Activated naive CD8-positive, alpha-beta T cell treated with anti-CD3 and anti-CD28 coated beads, Interleukin-2, amount 10 ng/mL, durations not matched to agents 7 days and 5 days (primary cell): ENCODE measurements at regions of chr17 and their contacts with region 1.

Region 1: DNA sequence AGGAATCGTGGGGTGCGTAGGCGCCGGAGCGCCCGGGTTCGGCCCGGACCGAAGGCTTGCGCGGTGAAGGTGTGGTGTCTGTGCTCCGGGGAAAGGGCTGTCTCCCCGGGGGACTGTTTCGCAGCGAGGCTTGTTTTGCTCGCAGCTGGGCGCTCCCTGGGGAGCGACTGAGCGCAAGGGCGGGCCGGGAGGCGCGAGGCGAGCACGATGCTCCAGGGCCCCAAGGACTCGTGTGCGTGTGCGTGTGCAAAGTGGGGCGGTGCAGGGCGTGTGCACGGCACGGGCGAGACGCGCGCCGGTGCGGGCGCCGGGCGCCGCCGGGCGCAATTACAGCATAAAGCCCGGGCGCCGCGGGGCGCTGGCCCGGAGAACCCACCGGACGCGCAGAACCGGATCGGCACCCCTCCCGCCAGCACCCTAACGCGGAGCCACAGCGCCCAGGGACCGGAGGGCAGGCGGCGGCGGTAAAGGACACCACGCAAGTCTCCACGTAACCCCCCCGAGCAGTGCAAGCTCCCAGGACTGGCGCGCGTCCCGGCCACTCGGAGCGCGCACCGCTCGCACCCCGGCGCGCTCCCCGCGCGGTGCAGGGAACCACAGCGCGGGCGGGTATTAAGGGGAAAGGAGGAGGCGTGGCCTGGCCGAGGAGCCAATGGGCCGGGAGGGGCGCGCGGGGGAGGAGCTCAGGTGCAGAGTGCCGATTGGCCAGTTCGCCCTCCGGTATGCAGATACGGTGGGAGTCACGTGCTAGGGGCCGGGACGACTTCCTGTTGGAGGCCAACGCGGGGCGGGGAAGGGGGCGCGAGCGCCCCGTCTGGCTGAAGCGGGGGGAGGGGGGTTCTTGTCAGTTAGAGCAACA is at the start of gene TNRC6C:
- DNase-seq: peak; percentile 99
- ATAC-seq: peak; percentile 85
- H3K4me3 Mint-ChIP-seq: peak within 1 kb of the TSS; percentile 98
- H3K27ac Mint-ChIP-seq: peak within 1 kb of the TSS; percentile 95
- H3K4me1 Mint-ChIP-seq: peaks cover 30% of the 10 kb centered on the region
- H3K27me3 Mint-ChIP-seq: peaks cover 28% of the 10 kb centered on the region
- total RNA-seq, gene TNRC6C: 74.7 TPM

Region 2: DNA sequence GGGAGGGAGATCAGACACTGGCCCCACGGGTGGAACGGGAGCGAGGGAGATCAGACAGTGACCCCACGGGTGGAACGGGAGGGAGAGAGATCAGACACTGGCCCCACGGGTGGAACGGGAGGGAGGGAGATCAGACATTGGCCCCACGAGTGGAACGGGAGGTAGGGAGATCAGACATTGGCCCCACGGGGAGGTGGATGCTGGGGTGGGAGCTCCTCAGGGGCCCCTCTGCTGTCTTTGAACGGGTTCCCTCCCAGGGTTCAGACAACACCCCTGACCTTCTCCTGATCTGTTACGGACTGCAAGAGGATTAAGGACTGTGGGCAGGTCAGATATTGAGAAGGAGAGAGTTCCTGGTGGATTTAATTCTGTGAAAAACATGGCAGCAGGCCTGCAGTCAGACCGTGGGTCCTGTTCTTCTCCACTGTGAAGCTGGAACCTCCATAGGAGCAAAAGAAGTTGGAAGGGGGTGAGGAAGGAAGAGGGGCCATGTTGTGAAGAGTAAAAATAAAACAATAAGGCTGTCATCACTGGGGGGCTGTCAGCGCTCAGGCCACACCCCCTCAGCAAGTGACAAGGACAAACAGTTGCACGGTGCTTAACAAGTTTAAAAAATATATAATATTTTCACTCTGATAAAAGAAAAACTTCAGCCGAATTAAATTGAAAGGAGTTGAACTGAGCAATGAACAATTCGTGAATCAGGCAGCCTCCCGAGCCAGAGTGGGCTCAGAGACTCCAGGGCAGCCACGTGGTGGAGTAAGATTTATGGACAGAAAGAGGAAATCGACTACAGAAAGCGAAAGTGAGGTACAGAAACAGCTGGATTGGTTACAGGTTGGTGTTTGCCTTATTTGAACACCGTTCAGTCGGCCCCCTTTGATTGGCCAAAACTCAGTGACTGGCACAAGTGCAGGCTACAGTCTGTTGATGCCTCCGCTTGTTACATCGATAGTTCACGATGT is 348.3 kb before region 1 on chr17:
- POLR2A ChIA-PET with region 1: interaction called, 23 read pairs
- DNase-seq: peak; percentile 57
- ATAC-seq: peak; percentile 99
- H3K4me3 Mint-ChIP-seq: peak overlapping the region; percentile 80
- H3K27ac Mint-ChIP-seq: peak overlapping the region; percentile 94
- H3K4me1 Mint-ChIP-seq: peaks cover 17% of the 10 kb centered on the region
- H3K27me3 Mint-ChIP-seq: peaks cover 5% of the 10 kb centered on the region

Region 3: DNA sequence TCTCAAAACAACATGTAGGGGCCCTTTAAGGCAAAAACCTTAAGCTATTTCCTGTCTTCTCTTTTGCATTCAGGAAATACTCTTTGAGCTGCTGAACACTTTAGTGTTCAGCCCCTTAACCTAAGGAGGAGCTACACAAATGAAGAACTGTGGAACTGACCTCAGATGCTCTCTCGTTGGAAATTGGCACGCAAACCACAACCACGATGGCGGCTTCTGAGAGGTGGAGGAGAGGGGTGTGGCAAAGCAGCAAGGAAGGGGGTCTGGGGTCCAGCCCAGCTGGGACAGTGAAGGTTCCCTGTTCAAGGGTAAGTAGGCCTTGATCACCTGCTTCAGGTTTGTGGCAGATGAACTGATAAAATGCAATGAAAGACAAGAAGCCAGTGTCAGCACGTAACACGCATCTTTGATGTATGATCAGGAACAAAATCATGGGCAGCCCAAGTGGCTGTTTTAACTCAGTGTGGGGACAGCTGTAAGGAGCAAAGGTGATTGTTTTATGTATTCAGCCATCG is 291.1 kb before region 1 on chr17:
- POLR2A ChIA-PET with region 1: interaction called, 19 read pairs
- DNase-seq: peak; percentile 87
- ATAC-seq: peak; percentile 92
- H3K4me3 Mint-ChIP-seq: peak overlapping the region; percentile 92
- H3K27ac Mint-ChIP-seq: peak overlapping the region; percentile 95
- H3K4me1 Mint-ChIP-seq: peaks cover 40% of the 10 kb centered on the region
- H3K27me3 Mint-ChIP-seq: peaks cover 6% of the 10 kb centered on the region

Region 4: DNA sequence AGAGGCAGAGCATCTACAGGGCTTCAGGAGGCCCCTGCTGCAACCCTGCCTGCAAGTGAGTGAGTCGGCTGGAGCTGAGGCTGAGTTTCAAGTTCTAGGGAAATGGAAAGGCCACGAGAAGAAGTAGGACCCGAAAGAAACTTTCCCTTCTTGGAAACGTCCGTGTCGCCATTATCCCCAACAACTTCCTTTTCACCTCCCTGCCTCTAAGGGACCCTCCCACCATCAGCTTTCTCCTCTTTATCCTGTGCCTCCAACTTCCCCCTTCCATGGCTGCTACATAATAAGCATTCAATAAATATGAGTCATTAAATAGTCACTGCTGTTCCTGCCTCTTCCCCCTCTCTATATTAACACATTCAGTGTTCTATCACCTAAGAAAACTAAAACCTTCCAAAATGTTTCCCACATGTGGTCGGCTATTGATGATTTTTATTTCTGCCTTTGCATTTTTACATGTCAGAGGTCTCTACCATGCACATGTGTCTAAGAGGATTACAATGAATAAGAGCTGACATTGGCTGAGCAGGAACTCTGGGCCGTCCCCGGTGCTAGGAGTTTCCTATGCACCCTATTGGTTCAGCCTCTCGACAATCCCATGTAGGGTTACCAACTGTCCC is 115.4 kb before region 1 on chr17:
- POLR2A ChIA-PET with region 1: interaction called, 30 read pairs
- DNase-seq: no peak
- ATAC-seq: no peak
- H3K4me3 Mint-ChIP-seq: peak overlapping the region; percentile 1
- H3K27ac Mint-ChIP-seq: peak overlapping the region; percentile 77
- H3K4me1 Mint-ChIP-seq: peaks cover 33% of the 10 kb centered on the region
- H3K27me3 Mint-ChIP-seq: no peaks in the 10 kb centered on the region

Region 5: GRCh38 chr17:77887464-77888241 is 70.4 kb before region 1 on chr17:
- POLR2A ChIA-PET with region 1: interaction called, 57 read pairs
- DNase-seq: peak; percentile 64
- ATAC-seq: peak; percentile 79
- H3K4me3 Mint-ChIP-seq: peak overlapping the region; percentile 75
- H3K27ac Mint-ChIP-seq: peak overlapping the region; percentile 71
- H3K4me1 Mint-ChIP-seq: peaks cover 24% of the 10 kb centered on the region
- H3K27me3 Mint-ChIP-seq: peaks cover 25% of the 10 kb centered on the region

Region 6: DNA sequence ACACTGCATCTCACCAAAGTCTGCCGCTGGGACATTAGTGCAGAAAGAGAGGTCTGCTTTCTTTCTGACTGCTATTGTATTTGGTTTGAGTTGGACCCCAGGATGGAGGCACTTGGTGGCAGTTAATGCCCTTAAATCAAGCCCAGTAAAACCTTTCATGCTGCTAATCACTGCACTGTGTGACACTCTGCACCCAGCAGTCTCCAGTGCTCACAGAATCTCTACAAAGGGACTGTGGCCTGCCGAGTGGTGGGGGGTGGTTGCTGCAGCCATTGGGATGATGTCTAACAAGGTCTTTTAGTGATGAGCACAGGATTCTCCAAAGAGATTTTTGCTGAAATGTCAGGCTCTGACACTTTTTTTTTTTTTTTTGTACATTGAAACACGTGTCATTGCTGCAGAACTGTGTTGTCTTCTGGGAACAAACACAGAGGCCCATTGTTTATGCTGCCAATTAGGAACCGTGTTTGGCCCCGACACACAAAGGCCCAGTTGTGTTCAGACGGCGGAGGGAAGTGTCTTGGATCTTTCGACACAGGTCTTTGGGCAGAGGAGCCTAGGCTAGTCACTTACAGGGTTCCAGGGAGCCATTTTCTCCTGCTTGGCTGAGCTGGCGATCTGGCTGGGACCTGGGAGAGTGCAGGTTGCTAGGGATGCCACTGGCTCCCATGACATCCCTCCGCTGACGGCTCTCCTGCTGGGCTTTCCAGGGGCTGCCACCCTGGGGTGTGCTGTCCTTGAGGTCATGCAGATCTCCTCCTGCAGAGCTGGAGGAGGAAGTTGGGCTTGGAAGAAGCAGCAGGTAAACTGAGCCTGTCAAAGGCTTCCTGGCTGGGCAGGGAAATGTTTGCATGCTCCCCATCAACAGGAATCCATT is 15.7 kb before region 1 on chr17:
- POLR2A ChIA-PET with region 1: no interaction called
- DNase-seq: no peak
- ATAC-seq: no peak
- H3K4me3 Mint-ChIP-seq: no peak overlapping the region
- H3K27ac Mint-ChIP-seq: no peak overlapping the region
- H3K4me1 Mint-ChIP-seq: no peaks in the 10 kb centered on the region
- H3K27me3 Mint-ChIP-seq: peaks cover 15% of the 10 kb centered on the region

Region 7: GRCh38 chr17:77968788-77969187 is 10.7 kb after region 1 on chr17:
- POLR2A ChIA-PET with region 1: interaction called, 10 read pairs
- DNase-seq: no peak
- ATAC-seq: no peak
- H3K4me3 Mint-ChIP-seq: no peak overlapping the region
- H3K27ac Mint-ChIP-seq: no peak overlapping the region
- H3K4me1 Mint-ChIP-seq: peaks cover 25% of the 10 kb centered on the region
- H3K27me3 Mint-ChIP-seq: no peaks in the 10 kb centered on the region

Region 8: GRCh38 chr17:78019367-78019975 is 61.4 kb after region 1 on chr17:
- POLR2A ChIA-PET with region 1: interaction called, 18 read pairs
- DNase-seq: no peak
- ATAC-seq: no peak
- H3K4me3 Mint-ChIP-seq: peak overlapping the region; percentile 68
- H3K27ac Mint-ChIP-seq: peak overlapping the region; percentile 85
- H3K4me1 Mint-ChIP-seq: peaks cover 22% of the 10 kb centered on the region
- H3K27me3 Mint-ChIP-seq: no peaks in the 10 kb centered on the region